PC-3 (cell line): ENCODE measurements at regions of chr20 and their contacts with region 1.

Region 1: GRCh38 chr20:12110711-12111110 is 193.0 kb downstream of the BTBD3 start:
- DNase-seq: no peak
- ATAC-seq: no peak
- H3K4me3 ChIP-seq: no peak overlapping the region
- H3K27ac ChIP-seq: no peak overlapping the region
- H3K4me1 ChIP-seq: peaks cover 26% of the 10 kb centered on the region
- H3K27me3 ChIP-seq: no peaks in the 10 kb centered on the region
- CTCF ChIP-seq: no peak

Region 2: DNA sequence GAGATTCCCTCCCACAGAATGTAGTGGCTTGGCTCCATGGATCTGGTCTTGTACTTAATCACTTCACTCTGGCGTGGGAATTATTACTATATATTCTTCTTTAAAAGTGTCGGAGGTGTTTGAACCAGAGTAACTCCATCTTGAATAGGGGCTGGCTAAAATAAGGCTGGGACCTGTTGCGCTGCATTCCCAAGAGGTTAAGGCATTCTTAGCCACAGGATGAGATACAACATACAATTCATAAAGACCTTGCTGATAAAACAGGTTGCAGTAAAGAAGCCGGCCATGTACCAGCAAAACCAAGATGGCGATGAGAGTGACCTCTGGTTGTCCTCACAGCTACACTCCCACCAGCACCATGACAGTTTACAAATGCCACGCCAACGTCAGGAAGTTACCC is 503.2 kb before region 1 on chr20:
- CTCF ChIA-PET with region 1: no interaction called
- POLR2A ChIA-PET with region 1: interaction called, 10 read pairs
- intact Hi-C with region 1: no loop called
- DNase-seq: no peak
- ATAC-seq: no peak
- H3K4me3 ChIP-seq: no peak overlapping the region
- H3K27ac ChIP-seq: no peak overlapping the region
- H3K4me1 ChIP-seq: no peaks in the 10 kb centered on the region
- H3K27me3 ChIP-seq: peaks cover 88% of the 10 kb centered on the region
- CTCF ChIP-seq: no peak

Region 3: GRCh38 chr20:11935212-11936154 is 175.2 kb before region 1 on chr20:
- CTCF ChIA-PET with region 1: no interaction called
- POLR2A ChIA-PET with region 1: no interaction called
- intact Hi-C with region 1: no loop called
- DNase-seq: no peak
- ATAC-seq: no peak
- H3K4me3 ChIP-seq: no peak overlapping the region
- H3K27ac ChIP-seq: no peak overlapping the region
- H3K4me1 ChIP-seq: no peaks in the 10 kb centered on the region
- H3K27me3 ChIP-seq: no peaks in the 10 kb centered on the region
- CTCF ChIP-seq: no peak

Region 4: GRCh38 chr20:12276011-12276680 is 165.4 kb after region 1 on chr20:
- CTCF ChIA-PET with region 1: no interaction called
- POLR2A ChIA-PET with region 1: no interaction called
- intact Hi-C with region 1: no loop called
- DNase-seq: peak; percentile 45
- ATAC-seq: no peak
- H3K4me3 ChIP-seq: no peak overlapping the region
- H3K27ac ChIP-seq: no peak overlapping the region
- H3K4me1 ChIP-seq: no peaks in the 10 kb centered on the region
- H3K27me3 ChIP-seq: no peaks in the 10 kb centered on the region
- CTCF ChIP-seq: no peak